Heart right ventricle (tissue), 16 donors: ENCODE measurements at regions of chr13 and their contacts with region 1.

Region 1: GRCh38 chr13:97484301-97484700 is 50.3 kb downstream of the RAP2A start:
- DNase-seq: no peak
- ATAC-seq: peak in 3 of 8 donors; percentile 37 to 83 (median 67)
- H3K4me3 ChIP-seq: no peak overlapping the region
- H3K27ac ChIP-seq: no peak overlapping the region
- H3K4me1 ChIP-seq: peaks cover 0 to 4% (median 0%) of the 10 kb centered on the region in 9 donors
- H3K27me3 ChIP-seq: no peaks in the 10 kb centered on the region
- CTCF ChIP-seq: no peak

Region 2: DNA sequence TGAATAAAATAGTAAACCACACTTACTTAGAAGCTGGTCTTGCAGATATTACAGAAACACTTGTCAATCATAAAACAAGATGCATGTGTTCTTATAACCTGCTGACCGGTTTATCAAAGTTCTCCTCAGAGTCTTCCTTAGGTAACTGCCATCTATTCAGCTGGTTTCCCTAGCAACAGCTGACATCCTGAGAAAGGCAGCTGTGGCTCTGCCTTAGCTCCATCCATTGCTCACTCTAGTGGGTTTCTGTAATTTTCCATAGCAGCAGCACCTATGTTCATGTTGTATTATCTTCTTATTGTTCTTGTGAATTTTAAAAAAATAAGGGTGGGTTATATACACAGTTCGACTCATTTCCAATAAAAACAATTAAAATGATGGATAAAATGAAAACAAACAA is 37.4 kb after region 1 on chr13:
- intact Hi-C with region 1: loop called in 1 of 10 experiments (anchors 5 kb)
- DNase-seq: no peak
- ATAC-seq: no peak
- H3K4me3 ChIP-seq: no peak overlapping the region
- H3K27ac ChIP-seq: no peak overlapping the region
- H3K4me1 ChIP-seq: no peaks in the 10 kb centered on the region
- H3K27me3 ChIP-seq: no peaks in the 10 kb centered on the region
- CTCF ChIP-seq: no peak